PC-3 (cell line): ENCODE measurements at regions of chr2 and their contacts with region 1.

Region 1: GRCh38 chr2:1721706-1722646 is 22.3 kb downstream of the PXDN start:
- DNase-seq: peak; percentile 87
- ATAC-seq: peak; percentile 60
- H3K4me3 ChIP-seq: peak overlapping the region; percentile 45; the same call in 1 of the 2 replicates
- H3K27ac ChIP-seq: peak overlapping the region; percentile 99
- H3K4me1 ChIP-seq: peaks cover 61% of the 10 kb centered on the region
- H3K27me3 ChIP-seq: no peaks in the 10 kb centered on the region
- CTCF ChIP-seq: no peak

Region 2: GRCh38 chr2:1736997-1737480 is 15.1 kb after region 1 on chr2:
- CTCF ChIA-PET with region 1: no interaction called
- POLR2A ChIA-PET with region 1: interaction called, 6 read pairs
- intact Hi-C with region 1: loop called (anchors 2 kb)
- DNase-seq: peak; percentile 92
- ATAC-seq: peak; percentile 87
- H3K4me3 ChIP-seq: peak overlapping the region; percentile 58
- H3K27ac ChIP-seq: peak overlapping the region; percentile 96
- H3K4me1 ChIP-seq: peaks cover 66% of the 10 kb centered on the region
- H3K27me3 ChIP-seq: no peaks in the 10 kb centered on the region
- CTCF ChIP-seq: no peak